ENCODE measurements at regions of chr11 and their contacts with region 1.

Region 1: DNA sequence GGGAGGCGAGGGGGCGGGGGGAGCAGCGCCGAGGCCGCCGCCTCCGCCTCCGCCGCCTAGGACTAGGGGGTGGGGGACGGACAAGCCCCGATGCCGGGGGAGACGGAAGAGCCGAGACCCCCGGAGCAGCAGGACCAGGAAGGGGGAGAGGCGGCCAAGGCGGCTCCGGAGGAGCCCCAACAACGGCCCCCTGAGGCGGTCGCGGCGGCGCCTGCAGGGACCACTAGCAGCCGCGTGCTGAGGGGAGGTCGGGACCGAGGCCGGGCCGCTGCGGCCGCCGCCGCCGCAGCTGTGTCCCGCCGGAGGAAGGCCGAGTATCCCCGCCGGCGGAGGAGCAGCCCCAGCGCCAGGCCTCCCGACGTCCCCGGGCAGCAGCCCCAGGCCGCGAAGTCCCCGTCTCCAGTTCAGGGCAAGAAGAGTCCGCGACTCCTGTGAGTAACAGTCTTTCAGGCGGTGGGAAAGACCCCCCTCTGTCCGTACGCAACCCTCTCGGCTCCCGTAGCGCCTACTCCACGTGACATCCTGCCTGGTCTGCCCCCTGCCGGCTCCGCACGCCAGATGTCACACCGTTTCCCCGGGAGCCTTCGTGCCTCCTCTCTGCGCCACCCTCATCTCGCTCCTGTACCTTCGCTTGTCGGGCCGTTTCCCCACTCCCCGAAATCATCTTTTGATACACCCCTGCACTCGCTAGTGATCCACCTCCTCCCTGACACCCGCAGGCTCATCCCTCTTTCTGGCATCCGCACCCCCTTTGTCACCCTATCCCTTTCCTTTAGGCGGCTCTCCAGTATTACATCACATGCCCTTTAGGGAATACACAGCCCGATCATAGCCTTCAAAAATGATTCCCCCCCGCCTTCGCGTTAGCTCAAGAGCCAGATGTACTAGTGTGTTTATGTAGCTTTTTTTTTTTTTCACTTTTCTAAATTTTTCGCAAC is 598 bp downstream of the ZFP91 start:
- DNase-seq: peak; percentile 96 to 98
- ATAC-seq: peak; percentile 87
- H3K4me3 ChIP-seq: peak overlapping the region; percentile 97 to 98
- H3K27ac ChIP-seq: peak overlapping the region; percentile 97 to 100
- H3K4me1 ChIP-seq: peaks cover 4 to 16% of the 10 kb centered on the region in 2 donors
- H3K27me3 ChIP-seq: no peaks in the 10 kb centered on the region

Region 2: GRCh38 chr11:57667736-57668435 is 911.6 kb before region 1 on chr11 and contains the start of gene ZDHHC5:
- intact Hi-C with region 1: loop called in 1 of 2 experiments (anchors 10 kb)
- DNase-seq: peak; percentile 100
- ATAC-seq: peak; percentile 98
- H3K4me3 ChIP-seq: peak within 1 kb of the TSS; percentile 52 to 76
- H3K27ac ChIP-seq: peak within 1 kb of the TSS; percentile 43 to 76
- H3K4me1 ChIP-seq: no peaks in the 10 kb centered on the region
- H3K27me3 ChIP-seq: no peaks in the 10 kb centered on the region
- total RNA-seq, gene ZDHHC5: 47.9 to 51.0 TPM

Region 3: DNA sequence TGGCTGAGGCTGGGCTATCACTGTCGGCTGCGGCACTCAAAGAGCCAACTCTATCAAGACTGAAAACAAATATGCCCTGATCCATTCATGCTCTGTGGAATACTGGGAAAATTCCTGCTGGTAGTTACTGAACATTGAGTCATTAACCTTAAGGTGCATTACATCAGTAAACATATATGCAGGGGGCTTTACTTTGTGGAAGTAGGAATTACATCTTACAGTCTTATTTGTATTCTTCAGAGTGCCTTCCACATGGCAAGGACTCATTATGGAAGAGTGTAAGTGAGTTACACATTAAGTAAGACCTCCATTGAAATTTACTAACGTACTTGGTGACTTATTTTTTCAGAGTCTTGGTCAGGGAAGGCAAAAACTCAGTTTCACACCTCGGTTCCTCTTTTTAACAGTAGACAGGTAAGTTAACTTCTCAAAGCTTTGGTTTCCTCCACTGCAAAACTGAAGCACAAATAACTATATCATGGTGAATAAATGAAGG is 76.1 kb before region 1 on chr11:
- intact Hi-C with region 1: no loop called
- DNase-seq: no peak
- ATAC-seq: no peak
- H3K4me3 ChIP-seq: no peak overlapping the region
- H3K27ac ChIP-seq: no peak overlapping the region
- H3K4me1 ChIP-seq: no peaks in the 10 kb centered on the region
- H3K27me3 ChIP-seq: no peaks in the 10 kb centered on the region

Region 4: GRCh38 chr11:58546841-58547240 is 32.6 kb before region 1 on chr11:
- intact Hi-C with region 1: no loop called
- DNase-seq: no peak
- ATAC-seq: no peak
- H3K4me3 ChIP-seq: no peak overlapping the region
- H3K27ac ChIP-seq: no peak overlapping the region
- H3K4me1 ChIP-seq: peaks cover 0 to under 1% of the 10 kb centered on the region in 2 donors
- H3K27me3 ChIP-seq: no peaks in the 10 kb centered on the region

Region 5: DNA sequence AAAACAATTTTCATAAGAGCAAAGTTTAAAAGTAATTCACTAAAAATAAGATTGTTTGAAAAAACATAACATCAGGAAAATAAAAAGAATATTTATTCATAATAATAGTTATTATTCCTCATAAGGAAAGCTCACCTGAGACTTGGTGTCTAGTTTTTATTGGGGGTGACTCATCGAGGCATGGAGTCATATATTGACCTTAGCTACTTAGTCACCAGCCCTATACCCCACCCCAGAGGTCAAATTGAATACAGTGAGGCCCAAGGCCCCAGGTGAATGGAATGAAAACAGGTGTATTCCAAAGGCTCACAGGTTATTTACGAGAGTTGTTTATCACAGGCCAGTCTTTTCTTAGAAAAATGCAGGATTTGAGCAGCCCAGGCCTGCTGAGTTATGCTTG is 79.9 kb after region 1 on chr11:
- intact Hi-C with region 1: no loop called
- DNase-seq: no peak
- ATAC-seq: no peak
- H3K4me3 ChIP-seq: no peak overlapping the region
- H3K27ac ChIP-seq: no peak overlapping the region
- H3K4me1 ChIP-seq: no peaks in the 10 kb centered on the region
- H3K27me3 ChIP-seq: no peaks in the 10 kb centered on the region

Region 6: GRCh38 chr11:59142530-59143507 is 563.4 kb after region 1 on chr11 and contains the start of gene FAM111A:
- intact Hi-C with region 1: loop called in 1 of 2 experiments (anchors 10 kb)
- DNase-seq: peak; percentile 94
- ATAC-seq: peak; percentile 93
- H3K4me3 ChIP-seq: peak within 1 kb of the TSS; percentile 79 to 86
- H3K27ac ChIP-seq: peak within 1 kb of the TSS; percentile 52 to 91
- H3K4me1 ChIP-seq: no peaks in the 10 kb centered on the region
- H3K27me3 ChIP-seq: no peaks in the 10 kb centered on the region
- total RNA-seq, gene FAM111A: 19.0 to 49.0 TPM